ENCODE measurements at regions of chr4 and their contacts with region 1.

Region 1: GRCh38 chr4:182137343-182137742 is 105.9 kb upstream of the TENM3 start:
- DNase-seq: peak; percentile 83
- H3K4me3 ChIP-seq: no peak overlapping the region
- H3K27ac ChIP-seq: no peak overlapping the region
- H3K4me1 ChIP-seq: peaks cover 29% of the 10 kb centered on the region
- H3K27me3 ChIP-seq: no peaks in the 10 kb centered on the region
- CTCF ChIP-seq: no peak

Region 2: GRCh38 chr4:181957045-181957444 is 180.3 kb before region 1 on chr4:
- CTCF ChIA-PET with region 1: no interaction called
- POLR2A ChIA-PET with region 1: no interaction called
- intact Hi-C with region 1: no loop called
- DNase-seq: no peak
- H3K4me3 ChIP-seq: no peak overlapping the region
- H3K27ac ChIP-seq: no peak overlapping the region
- H3K4me1 ChIP-seq: no peaks in the 10 kb centered on the region
- H3K27me3 ChIP-seq: no peaks in the 10 kb centered on the region
- CTCF ChIP-seq: no peak

Region 3: GRCh38 chr4:181991369-181992108 is 145.8 kb before region 1 on chr4:
- CTCF ChIA-PET with region 1: no interaction called
- POLR2A ChIA-PET with region 1: no interaction called
- intact Hi-C with region 1: no loop called
- DNase-seq: no peak
- H3K4me3 ChIP-seq: no peak overlapping the region
- H3K27ac ChIP-seq: no peak overlapping the region
- H3K4me1 ChIP-seq: no peaks in the 10 kb centered on the region
- H3K27me3 ChIP-seq: peaks cover 83% of the 10 kb centered on the region
- CTCF ChIP-seq: no peak

Region 4: DNA sequence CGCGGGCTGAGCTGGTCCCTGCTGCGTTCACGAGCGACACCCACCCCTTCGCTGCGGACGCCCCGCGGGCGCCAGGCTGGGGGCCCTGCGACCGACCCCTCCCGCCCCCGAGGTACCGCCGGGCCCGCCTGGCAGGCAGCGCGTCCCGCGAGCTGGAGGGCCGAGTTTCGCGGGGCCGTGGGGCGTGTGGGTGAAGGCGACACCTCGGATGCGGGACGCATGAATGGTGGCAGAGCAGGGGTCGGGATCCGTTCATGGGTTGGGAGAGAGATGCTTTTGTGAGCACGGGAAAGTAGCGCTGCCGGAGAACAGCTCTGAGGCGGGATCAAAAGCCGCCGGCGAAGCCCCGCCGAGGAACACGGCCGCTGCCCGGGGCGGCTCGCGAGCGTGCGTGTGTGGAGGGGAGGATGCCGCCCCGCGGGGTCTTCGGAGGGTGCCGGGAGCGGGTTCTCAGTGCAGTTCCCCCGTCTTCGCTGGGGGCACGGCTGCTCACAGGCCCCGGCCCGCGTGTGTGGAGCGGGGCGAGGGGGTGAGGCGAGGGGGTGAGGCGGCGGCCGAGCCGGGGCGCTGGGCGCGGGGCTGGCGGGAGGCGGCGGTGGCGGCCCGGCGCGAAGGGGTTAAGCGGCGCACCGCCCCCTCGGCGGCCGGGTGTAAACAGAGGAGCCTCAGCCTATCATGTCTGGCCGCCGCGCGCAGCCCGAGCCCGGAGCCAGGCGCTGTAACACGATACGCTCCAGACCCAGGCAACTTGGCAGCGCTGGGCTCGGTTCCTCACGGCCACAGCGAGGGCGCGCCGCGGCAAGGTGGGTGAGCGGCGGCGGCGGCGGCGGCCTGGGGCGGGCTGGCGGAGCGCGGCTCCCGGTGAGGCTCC is 311.2 kb after region 1 on chr4:
- CTCF ChIA-PET with region 1: no interaction called
- POLR2A ChIA-PET with region 1: no interaction called
- intact Hi-C with region 1: loop called (anchors 10 kb)
- DNase-seq: peak; percentile 91
- H3K4me3 ChIP-seq: peak overlapping the region; percentile 62
- H3K27ac ChIP-seq: no peak overlapping the region
- H3K4me1 ChIP-seq: peaks cover 8% of the 10 kb centered on the region
- H3K27me3 ChIP-seq: peaks cover 41% of the 10 kb centered on the region
- CTCF ChIP-seq: no peak

Region 5: DNA sequence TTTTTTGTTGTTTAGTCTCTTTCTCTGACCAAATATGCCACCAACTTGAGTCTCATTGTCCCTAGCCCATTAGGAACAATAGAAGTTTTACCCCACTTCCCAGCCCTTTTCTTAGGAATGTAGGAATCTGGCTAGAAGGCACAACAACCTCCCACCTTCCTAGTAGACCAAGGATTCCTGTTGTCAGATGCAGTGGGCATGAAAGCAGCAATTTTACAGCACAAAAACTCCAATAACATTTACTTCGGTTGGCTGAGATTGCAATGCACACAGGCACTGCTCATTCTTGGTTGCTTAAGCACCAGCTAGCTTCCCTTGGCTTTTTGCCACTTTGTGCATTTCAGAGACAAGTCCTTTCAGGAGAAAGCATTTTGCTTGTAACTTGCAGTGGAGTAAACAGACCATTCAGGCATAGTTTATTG is 418.7 kb after region 1 on chr4:
- CTCF ChIA-PET with region 1: no interaction called
- POLR2A ChIA-PET with region 1: no interaction called
- intact Hi-C with region 1: loop called (anchors 10 kb)
- DNase-seq: peak; percentile 81
- H3K4me3 ChIP-seq: no peak overlapping the region
- H3K27ac ChIP-seq: no peak overlapping the region
- H3K4me1 ChIP-seq: peaks cover 29% of the 10 kb centered on the region
- H3K27me3 ChIP-seq: no peaks in the 10 kb centered on the region
- CTCF ChIP-seq: no peak

Measured in A673 (cell line).